Naive thymus-derived CD4-positive, alpha-beta T cell (primary cell): ENCODE measurements at regions of chr2 and their contacts with region 1.

Region 1: GRCh38 chr2:129936334-129936934 is 43.0 kb upstream of the RAB6C start:
- DNase-seq: peak in 6 of 9 donors; percentile 8 to 55 (median 27)
- ATAC-seq: peak; percentile 56
- H3K4me3 ChIP-seq: no peak overlapping the region
- H3K4me3 Mint-ChIP-seq: no peak overlapping the region
- H3K27ac ChIP-seq: no peak overlapping the region
- H3K27ac Mint-ChIP-seq: no peak overlapping the region
- H3K4me1 ChIP-seq: no peaks in the 10 kb centered on the region
- H3K4me1 Mint-ChIP-seq: no peaks in the 10 kb centered on the region
- H3K27me3 ChIP-seq: no peaks in the 10 kb centered on the region
- H3K27me3 Mint-ChIP-seq: peaks cover 8 to 46% (median 37%) of the 10 kb centered on the region in 5 donors

Region 2: GRCh38 chr2:130380096-130380934 is 443.9 kb after region 1 on chr2:
- CTCF ChIA-PET with region 1: no interaction called
- POLR2A ChIA-PET with region 1: no interaction called
- intact Hi-C with region 1: loop called in 1 of 2 experiments (anchors 5 kb)
- DNase-seq: no peak
- ATAC-seq: no peak
- H3K4me3 ChIP-seq: no peak overlapping the region
- H3K4me3 Mint-ChIP-seq: peak overlapping the region in 3 of 10 donors; percentile 11 to 59 (median 32)
- H3K27ac ChIP-seq: no peak overlapping the region
- H3K27ac Mint-ChIP-seq: peak overlapping the region in 3 of 9 donors; percentile 21 to 78 (median 38)
- H3K4me1 ChIP-seq: peaks cover 8% of the 10 kb centered on the region in 2 donors
- H3K4me1 Mint-ChIP-seq: peaks cover 31 to 55% (median 53%) of the 10 kb centered on the region in 7 donors
- H3K27me3 ChIP-seq: no peaks in the 10 kb centered on the region
- H3K27me3 Mint-ChIP-seq: no peaks in the 10 kb centered on the region